PC-9 (cell line): ENCODE measurements at regions of chr4 and their contacts with region 1.

Region 1: GRCh38 chr4:21765810-21766407 is 182.7 kb downstream of the KCNIP4 start:
- DNase-seq: peak; percentile 49 to 51
- H3K4me3 ChIP-seq: no peak overlapping the region
- H3K27ac ChIP-seq: no peak overlapping the region
- H3K4me1 ChIP-seq: no peaks in the 10 kb centered on the region
- H3K27me3 ChIP-seq: no peaks in the 10 kb centered on the region
- CTCF ChIP-seq: peak; percentile 73

Region 2: GRCh38 chr4:21304540-21304887 is 461.4 kb before region 1 on chr4:
- CTCF ChIA-PET with region 1: no interaction called
- POLR2A ChIA-PET with region 1: no interaction called
- intact Hi-C with region 1: no loop called
- DNase-seq: no peak
- H3K4me3 ChIP-seq: no peak overlapping the region
- H3K27ac ChIP-seq: no peak overlapping the region
- H3K4me1 ChIP-seq: no peaks in the 10 kb centered on the region
- H3K27me3 ChIP-seq: peaks cover 16% of the 10 kb centered on the region
- CTCF ChIP-seq: no peak

Region 3: DNA sequence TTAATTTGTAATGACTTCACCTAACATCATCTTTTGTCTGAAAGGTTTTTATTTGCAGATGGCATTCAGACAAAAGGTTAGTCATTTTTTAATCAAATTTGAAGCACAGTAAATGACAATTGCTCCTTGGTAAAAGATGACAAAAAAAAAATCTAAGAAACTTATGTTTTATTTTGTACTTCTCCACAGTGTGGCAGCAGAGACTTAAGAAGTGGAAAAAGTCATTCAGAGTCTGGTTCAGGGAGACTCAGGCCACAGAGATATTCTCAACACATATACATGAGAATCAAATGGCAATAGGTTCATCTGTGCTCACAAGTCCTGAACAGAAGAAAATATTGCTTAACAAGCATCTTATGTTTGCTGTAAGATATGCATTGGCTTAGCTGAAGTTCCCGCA is 253.6 kb before region 1 on chr4:
- CTCF ChIA-PET with region 1: no interaction called
- POLR2A ChIA-PET with region 1: no interaction called
- intact Hi-C with region 1: loop called (anchors 1 kb)
- DNase-seq: no peak
- H3K4me3 ChIP-seq: no peak overlapping the region
- H3K27ac ChIP-seq: no peak overlapping the region
- H3K4me1 ChIP-seq: no peaks in the 10 kb centered on the region
- H3K27me3 ChIP-seq: no peaks in the 10 kb centered on the region
- CTCF ChIP-seq: peak; percentile 56; the same call in 1 of the 2 replicates

Region 4: DNA sequence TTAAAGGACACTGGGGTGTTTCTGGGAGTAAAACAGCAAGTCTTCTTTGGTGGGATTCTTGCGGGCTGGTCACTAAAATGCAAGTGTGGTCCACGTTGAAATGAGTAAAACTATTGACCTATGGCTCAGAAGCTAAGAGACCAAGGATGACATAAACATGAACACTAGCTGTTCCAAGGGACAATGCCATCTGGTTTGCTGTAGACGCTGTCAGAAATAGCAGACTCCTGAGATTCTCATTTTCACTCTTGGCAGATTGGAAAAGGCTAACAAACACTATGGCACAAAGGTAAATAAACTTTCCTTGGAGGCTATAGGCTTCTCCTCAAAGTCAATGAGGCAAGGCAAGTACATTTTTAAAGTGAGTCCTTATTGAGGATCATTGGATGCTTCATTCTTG is 160.9 kb before region 1 on chr4:
- CTCF ChIA-PET with region 1: no interaction called
- POLR2A ChIA-PET with region 1: no interaction called
- intact Hi-C with region 1: loop called (anchors 10 kb)
- DNase-seq: no peak
- H3K4me3 ChIP-seq: no peak overlapping the region
- H3K27ac ChIP-seq: no peak overlapping the region
- H3K4me1 ChIP-seq: no peaks in the 10 kb centered on the region
- H3K27me3 ChIP-seq: no peaks in the 10 kb centered on the region
- CTCF ChIP-seq: no peak

Region 5: GRCh38 chr4:21802406-21802805 is 36.5 kb after region 1 on chr4:
- CTCF ChIA-PET with region 1: no interaction called
- POLR2A ChIA-PET with region 1: no interaction called
- intact Hi-C with region 1: loop called (anchors 2 kb)
- DNase-seq: no peak
- H3K4me3 ChIP-seq: no peak overlapping the region
- H3K27ac ChIP-seq: no peak overlapping the region
- H3K4me1 ChIP-seq: no peaks in the 10 kb centered on the region
- H3K27me3 ChIP-seq: no peaks in the 10 kb centered on the region
- CTCF ChIP-seq: no peak

Region 6: GRCh38 chr4:21921526-21922180 is 155.7 kb after region 1 on chr4:
- CTCF ChIA-PET with region 1: no interaction called
- POLR2A ChIA-PET with region 1: no interaction called
- intact Hi-C with region 1: no loop called
- DNase-seq: no peak
- H3K4me3 ChIP-seq: no peak overlapping the region
- H3K27ac ChIP-seq: no peak overlapping the region
- H3K4me1 ChIP-seq: no peaks in the 10 kb centered on the region
- H3K27me3 ChIP-seq: no peaks in the 10 kb centered on the region
- CTCF ChIP-seq: no peak